HepG2 (cell line): ENCODE measurements at regions of chr16 and their contacts with region 1.

Region 1: GRCh38 chr16:89217388-89218191 is at the start of gene ZNF778:
- DNase-seq: peak; percentile 77
- ATAC-seq: peak; percentile 92
- H3K4me3 ChIP-seq: peak within 1 kb of the TSS; percentile 89 to 96 (median 92)
- H3K27ac ChIP-seq: peak within 1 kb of the TSS; percentile 85
- H3K4me1 ChIP-seq: peaks cover 10% of the 10 kb centered on the region; the same call in 1 of the 2 replicates
- H3K27me3 ChIP-seq: no peaks in the 10 kb centered on the region; a peak in 1 of 5 replicates
- CTCF ChIP-seq: peak; percentile 24
- EP300 ChIP-seq: peak in 1 of 2 experiments; percentile 59; a peak in 1 of 4 replicates
- POLR2A ChIP-seq: peak; percentile 84 to 91
- RAD21 ChIP-seq: peak; percentile 65
- total RNA-seq, gene ZNF778: 7.2 and 9.3 TPM in 2 replicates

Region 2: GRCh38 chr16:88941913-88942909 is 275.4 kb before region 1 on chr16:
- CTCF ChIA-PET with region 1: interaction called, 5 read pairs
- POLR2A ChIA-PET with region 1: no interaction called
- in situ Hi-C with region 1: no loop called
- intact Hi-C with region 1: loop called (anchors 2 kb)
- DNase-seq: no peak
- ATAC-seq: peak; percentile 60
- H3K4me3 ChIP-seq: no peak overlapping the region
- H3K27ac ChIP-seq: no peak overlapping the region
- H3K4me1 ChIP-seq: no peaks in the 10 kb centered on the region
- H3K27me3 ChIP-seq: peaks cover 49 to 85% of the 10 kb centered on the region in 2 experiments
- CTCF ChIP-seq: peak; percentile 77
- EP300 ChIP-seq: no peak
- POLR2A ChIP-seq: no peak
- RAD21 ChIP-seq: peak; percentile 90

Region 3: DNA sequence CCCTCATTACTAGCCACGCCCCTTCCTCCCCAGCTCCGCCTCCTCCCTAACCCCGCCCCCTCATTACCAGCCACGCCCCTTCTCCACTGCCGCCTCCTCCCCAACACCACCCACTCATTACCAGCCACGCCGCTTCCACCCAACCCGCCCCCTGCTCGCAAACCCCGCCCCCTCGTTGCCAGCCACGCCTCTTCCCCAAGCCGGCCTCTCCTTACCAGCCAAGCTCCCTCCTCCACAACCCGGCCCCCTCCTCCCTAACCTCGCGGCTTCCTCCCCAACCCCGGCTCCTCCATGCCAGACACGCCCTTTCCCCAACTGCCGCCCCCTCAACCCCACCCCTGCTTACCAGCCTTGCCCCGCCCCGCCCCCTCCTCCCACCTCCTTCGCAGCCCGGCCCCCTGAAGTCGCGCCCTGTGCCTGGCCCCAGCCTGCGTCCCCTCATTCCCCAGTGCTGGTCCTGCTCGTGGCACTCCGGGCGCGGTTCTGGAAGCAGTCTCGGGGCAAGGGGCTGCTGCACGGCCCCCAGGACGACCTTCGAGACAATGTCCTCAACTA is 24.5 kb before region 1 on chr16:
- CTCF ChIA-PET with region 1: no interaction called
- POLR2A ChIA-PET with region 1: interaction called, 30 read pairs
- in situ Hi-C with region 1: no loop called
- intact Hi-C with region 1: no loop called
- DNase-seq: peak; percentile 70
- ATAC-seq: peak; percentile 1; the same call in 2 of the 3 replicates
- H3K4me3 ChIP-seq: no peak overlapping the region
- H3K27ac ChIP-seq: peak overlapping the region; percentile 53
- H3K4me1 ChIP-seq: peaks cover 50% of the 10 kb centered on the region
- H3K27me3 ChIP-seq: no peaks in the 10 kb centered on the region; a peak in 1 of 5 replicates
- CTCF ChIP-seq: no peak
- EP300 ChIP-seq: no peak
- POLR2A ChIP-seq: no peak
- RAD21 ChIP-seq: no peak

Region 4: GRCh38 chr16:89201439-89202377 is 15.9 kb before region 1 on chr16:
- CTCF ChIA-PET with region 1: no interaction called
- POLR2A ChIA-PET with region 1: interaction called, 30 read pairs
- in situ Hi-C with region 1: no loop called
- intact Hi-C with region 1: loop called (anchors 1 kb)
- DNase-seq: peak; percentile 78
- ATAC-seq: peak; percentile 32
- H3K4me3 ChIP-seq: peak overlapping the region; percentile 62 to 99 (median 92)
- H3K27ac ChIP-seq: peak overlapping the region; percentile 82
- H3K4me1 ChIP-seq: peaks cover 33% of the 10 kb centered on the region
- H3K27me3 ChIP-seq: no peaks in the 10 kb centered on the region; a peak in 1 of 5 replicates
- CTCF ChIP-seq: no peak
- EP300 ChIP-seq: no peak
- POLR2A ChIP-seq: peak in 1 of 2 experiments; percentile 91; a peak in 2 of 4 replicates
- RAD21 ChIP-seq: peak; percentile 76

Region 5: DNA sequence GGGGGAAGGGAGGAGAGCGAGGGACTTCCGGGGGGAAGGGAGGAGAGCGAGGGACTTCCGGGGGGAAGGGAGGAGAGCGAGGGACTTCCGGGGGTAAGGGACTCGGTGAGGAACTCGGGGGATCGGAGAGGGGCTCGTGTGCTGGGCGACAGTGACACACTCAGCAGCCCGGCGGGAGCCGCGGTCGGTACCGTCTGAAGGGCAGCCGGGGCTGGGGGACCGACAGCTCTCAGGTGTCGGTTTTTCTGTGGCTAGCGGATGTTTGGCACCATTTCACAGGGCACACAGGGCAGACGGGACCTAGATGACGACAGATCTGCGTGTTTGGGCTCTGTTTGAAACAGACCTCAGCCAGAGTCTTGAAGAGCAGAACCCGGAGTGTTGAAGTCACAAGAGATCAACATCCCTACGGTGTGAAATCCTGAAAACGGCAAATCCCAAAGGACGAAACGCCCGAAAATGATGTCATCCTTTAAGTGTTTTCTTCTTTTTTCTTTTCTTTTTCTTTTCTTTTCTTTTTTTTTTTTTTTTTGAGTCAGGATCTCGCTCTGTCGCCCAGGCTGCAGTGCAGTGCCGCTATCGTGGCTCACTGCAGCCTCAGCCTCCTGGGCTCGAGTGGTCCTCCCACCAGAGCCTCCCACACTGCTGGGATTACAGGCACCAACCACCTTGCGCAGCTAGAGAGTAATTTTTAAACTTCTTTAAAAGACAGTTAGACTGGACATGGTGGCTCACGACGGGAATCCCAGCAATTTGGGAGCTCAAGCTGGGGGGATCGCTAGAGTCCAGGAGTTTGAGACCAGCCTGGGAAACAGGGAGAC is 23.8 kb after region 1 on chr16:
- CTCF ChIA-PET with region 1: no interaction called
- POLR2A ChIA-PET with region 1: interaction called, 19 read pairs
- in situ Hi-C with region 1: no loop called
- intact Hi-C with region 1: no loop called
- DNase-seq: peak; percentile 82
- ATAC-seq: peak; percentile 89
- H3K4me3 ChIP-seq: peak overlapping the region; percentile 66 to 99 (median 90)
- H3K27ac ChIP-seq: peak overlapping the region; percentile 96
- H3K4me1 ChIP-seq: peaks cover 41% of the 10 kb centered on the region
- H3K27me3 ChIP-seq: no peaks in the 10 kb centered on the region; a peak in 1 of 5 replicates
- CTCF ChIP-seq: no peak
- EP300 ChIP-seq: no peak
- POLR2A ChIP-seq: peak; percentile 98
- RAD21 ChIP-seq: peak; percentile 4; the same call in 1 of the 2 replicates

Region 6: GRCh38 chr16:89319883-89320781 is 102.5 kb after region 1 on chr16:
- CTCF ChIA-PET with region 1: no interaction called
- POLR2A ChIA-PET with region 1: no interaction called
- in situ Hi-C with region 1: no loop called
- intact Hi-C with region 1: no loop called
- DNase-seq: peak; percentile 64
- ATAC-seq: peak; percentile 74
- H3K4me3 ChIP-seq: peak overlapping the region in 1 of 3 experiments; percentile 1; a peak in 1 of 6 replicates
- H3K27ac ChIP-seq: peak overlapping the region; percentile 30
- H3K4me1 ChIP-seq: peaks cover 67% of the 10 kb centered on the region
- H3K27me3 ChIP-seq: no peaks in the 10 kb centered on the region
- CTCF ChIP-seq: no peak
- EP300 ChIP-seq: no peak
- POLR2A ChIP-seq: 0 out of 4 replicates have a peak, but pooled peaks of 1 of the 2 experiments have one; percentile 7
- RAD21 ChIP-seq: no peak